Mammary epithelial cell (primary cell): ENCODE measurements at regions of chr1 and their contacts with region 1.

Region 1: GRCh38 chr1:147627435-147628110 is 42.8 kb downstream of the ACP6 start:
- DNase-seq: peak; percentile 6
- H3K4me3 ChIP-seq: no peak overlapping the region
- H3K27ac ChIP-seq: no peak overlapping the region
- H3K4me1 ChIP-seq: no peaks in the 10 kb centered on the region
- H3K27me3 ChIP-seq: no peaks in the 10 kb centered on the region
- CTCF ChIP-seq: peak; percentile 85 to 96

Region 2: DNA sequence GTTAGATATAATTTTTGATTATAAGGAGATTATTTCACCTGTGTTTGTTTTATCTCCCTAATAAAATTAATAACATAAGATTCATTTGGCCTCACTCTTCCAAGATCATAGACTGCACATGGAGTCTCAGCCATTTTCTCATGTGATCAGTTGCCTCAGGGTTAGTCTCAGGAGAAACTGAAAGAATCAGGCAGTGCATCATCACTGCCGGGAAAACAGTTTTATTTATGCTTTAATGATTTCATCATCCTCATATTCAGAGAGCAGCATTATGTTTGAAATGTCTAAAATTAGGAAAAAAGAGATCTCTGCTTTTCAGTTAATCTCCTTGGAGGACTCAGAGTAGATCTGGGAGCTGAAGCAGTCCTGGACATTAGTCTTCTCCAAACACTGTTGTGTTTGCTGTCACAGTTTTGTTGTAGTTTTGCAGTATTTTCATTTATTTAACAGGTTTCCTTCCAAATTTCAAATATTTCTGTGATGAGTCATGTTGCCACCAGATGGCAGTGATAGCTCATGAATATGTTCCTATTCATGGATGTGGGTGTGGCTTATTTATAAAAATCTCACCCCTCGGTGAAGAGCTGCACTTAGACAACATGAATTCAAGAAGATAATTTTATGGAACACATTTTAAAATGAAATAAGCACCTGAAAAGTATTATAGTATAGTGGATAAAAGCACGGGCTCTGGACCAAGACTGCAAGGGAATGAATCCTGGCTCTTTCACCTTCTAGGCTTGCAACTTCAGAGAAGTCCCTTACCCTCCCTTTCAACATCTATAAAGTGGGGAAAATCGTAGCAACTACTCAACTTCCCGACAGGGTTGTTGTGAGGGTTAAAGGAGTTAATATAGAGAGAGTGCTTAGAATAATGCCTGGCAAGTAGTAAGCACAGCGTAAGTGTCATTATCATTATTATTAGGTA is 353.9 kb before region 1 on chr1:
- CTCF ChIA-PET with region 1: no interaction called
- dilution Hi-C with region 1: no loop called
- in situ Hi-C with region 1: loop called in 1 of 2 experiments (anchors 25 kb)
- intact Hi-C with region 1: loop called (anchors 10 kb)
- DNase-seq: peak; percentile 79
- H3K4me3 ChIP-seq: no peak overlapping the region
- H3K27ac ChIP-seq: peak overlapping the region; percentile 83
- H3K4me1 ChIP-seq: peaks cover 10% of the 10 kb centered on the region
- H3K27me3 ChIP-seq: no peaks in the 10 kb centered on the region
- CTCF ChIP-seq: peak; percentile 30 to 45

Region 3: DNA sequence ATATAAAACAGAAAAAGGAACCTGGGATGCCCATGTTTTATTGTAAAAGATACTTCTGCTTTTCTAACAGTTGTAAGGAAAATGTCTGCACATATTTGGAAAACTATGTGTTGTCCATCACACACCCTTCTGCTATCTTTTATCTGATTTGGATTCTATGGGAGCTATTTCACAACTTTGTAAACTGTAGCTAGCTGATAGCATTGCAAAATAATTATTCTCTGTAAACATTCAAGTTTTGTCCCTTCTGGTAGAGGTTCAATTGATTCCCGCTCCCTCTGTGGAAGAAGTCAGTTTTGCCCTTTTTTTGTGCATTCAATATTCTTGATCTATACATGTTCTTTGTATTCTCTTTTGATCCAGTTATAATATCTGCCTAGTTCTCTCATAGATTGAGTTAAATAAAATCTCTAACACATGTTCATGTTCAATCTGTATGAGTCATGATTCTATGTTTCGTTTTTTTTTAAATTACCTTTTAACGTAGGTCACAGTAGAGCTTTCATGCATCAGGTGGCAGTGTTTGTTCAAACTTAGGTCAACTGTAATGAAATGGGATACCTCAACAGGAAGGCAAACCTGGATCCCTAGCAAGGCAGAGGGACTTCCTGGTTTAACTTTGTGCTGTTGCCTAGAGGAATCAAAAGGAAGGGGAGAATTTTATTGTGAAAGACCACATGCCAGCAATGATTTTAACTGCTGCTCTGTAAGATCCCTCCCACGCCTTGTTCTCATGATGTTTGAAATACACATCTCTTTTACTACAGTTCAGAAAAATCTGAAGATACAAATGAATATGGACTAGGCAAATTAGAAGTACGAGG is 112.3 kb before region 1 on chr1:
- CTCF ChIA-PET with region 1: no interaction called
- dilution Hi-C with region 1: loop called (anchors 25 kb)
- in situ Hi-C with region 1: loop called (anchors 10 kb)
- intact Hi-C with region 1: loop called (anchors 1 kb)
- DNase-seq: peak; percentile 64
- H3K4me3 ChIP-seq: no peak overlapping the region
- H3K27ac ChIP-seq: no peak overlapping the region
- H3K4me1 ChIP-seq: no peaks in the 10 kb centered on the region
- H3K27me3 ChIP-seq: peaks cover 3% of the 10 kb centered on the region
- CTCF ChIP-seq: peak in 1 of 2 donors; percentile 47

Region 4: DNA sequence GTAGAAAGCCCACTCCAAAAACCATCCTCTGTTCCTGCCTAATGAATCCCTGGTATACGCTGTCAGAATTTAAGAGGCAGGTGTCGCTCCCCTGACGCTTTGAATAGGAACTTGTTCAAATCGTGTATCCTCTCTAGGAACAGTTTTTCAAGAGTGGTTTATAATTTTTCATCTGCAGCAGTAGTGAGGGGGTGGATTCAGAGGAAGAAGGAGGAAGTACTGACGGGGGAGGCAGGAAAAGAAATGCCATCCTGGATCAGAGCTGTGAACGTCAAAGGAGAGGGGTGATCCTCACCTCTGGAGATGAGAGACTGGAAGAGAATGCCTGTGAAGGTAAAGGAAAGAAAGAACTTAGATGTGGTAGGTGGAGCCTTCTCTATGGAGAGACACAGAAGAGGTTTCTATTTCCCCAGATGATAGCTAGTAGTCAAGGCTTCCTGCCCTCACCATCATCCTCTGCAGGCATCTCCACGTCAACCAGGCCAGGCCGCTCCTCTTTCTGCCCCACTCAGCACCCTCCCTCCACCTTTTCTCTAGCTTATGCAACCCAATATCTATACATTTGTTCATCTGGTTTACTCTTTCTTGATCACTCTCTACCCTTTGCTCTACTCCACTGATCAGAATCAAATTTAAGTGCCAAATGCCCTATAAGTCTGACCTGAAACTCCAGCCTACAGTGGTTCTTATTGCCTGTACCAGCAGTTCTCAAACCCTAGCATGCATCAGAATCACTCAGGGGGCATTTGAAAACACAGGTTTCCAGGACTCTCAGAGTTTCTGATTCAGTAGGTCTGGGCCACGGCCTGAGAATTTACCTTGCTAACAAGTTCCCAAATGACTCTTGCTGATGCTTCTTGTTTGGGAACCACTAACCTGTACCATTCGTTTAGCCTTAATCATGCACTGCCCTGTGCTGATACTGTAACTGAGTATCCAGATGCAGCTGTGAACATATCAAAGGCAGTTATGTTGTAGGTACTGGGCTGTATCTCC is 99.3 kb before region 1 on chr1:
- CTCF ChIA-PET with region 1: no interaction called
- dilution Hi-C with region 1: loop called (anchors 25 kb)
- in situ Hi-C with region 1: loop called in 1 of 2 experiments (anchors 10 kb)
- intact Hi-C with region 1: no loop called
- DNase-seq: no peak
- H3K4me3 ChIP-seq: no peak overlapping the region
- H3K27ac ChIP-seq: no peak overlapping the region
- H3K4me1 ChIP-seq: no peaks in the 10 kb centered on the region
- H3K27me3 ChIP-seq: peaks cover 9% of the 10 kb centered on the region
- CTCF ChIP-seq: no peak

Region 5: DNA sequence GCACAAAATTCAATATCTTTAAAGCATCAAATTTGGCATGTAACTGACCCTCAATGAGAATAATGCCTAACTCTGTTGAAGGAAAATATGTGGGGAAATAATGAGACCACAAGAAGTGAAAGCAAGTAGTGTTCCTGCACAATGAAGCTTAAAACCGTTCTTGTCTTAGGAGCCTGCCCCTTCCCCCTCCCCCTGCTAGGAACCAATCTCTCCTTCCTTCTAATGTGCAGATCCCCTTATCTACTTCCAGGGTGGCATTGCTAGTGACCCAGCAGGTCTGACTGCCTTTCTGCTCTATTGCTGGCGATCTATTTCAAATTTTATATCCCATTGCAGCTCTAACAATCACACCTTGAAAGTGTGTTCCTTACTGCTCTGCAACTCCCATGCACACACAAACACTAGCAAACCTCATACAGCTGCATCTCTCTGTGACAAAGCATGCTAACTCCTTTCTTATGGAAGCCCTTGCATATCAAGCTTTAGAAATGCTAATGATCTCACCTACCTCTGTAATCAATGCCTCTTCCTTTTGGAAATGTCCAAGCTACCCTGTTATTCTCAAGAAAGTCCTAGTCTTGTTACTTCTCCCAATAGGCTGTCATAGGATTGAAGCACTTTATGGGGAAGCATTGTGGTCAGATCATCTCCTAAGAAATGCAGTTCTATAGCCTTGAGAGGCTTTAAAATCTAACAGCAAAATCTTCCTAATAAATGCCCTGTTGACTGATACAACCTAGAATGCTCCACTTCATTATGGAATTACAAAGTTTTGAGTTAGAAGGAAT is 59.8 kb before region 1 on chr1:
- CTCF ChIA-PET with region 1: no interaction called
- dilution Hi-C with region 1: no loop called
- in situ Hi-C with region 1: no loop called
- intact Hi-C with region 1: no loop called
- DNase-seq: no peak
- H3K4me3 ChIP-seq: no peak overlapping the region
- H3K27ac ChIP-seq: no peak overlapping the region
- H3K4me1 ChIP-seq: no peaks in the 10 kb centered on the region
- H3K27me3 ChIP-seq: peaks cover 4% of the 10 kb centered on the region
- CTCF ChIP-seq: no peak

Region 6: DNA sequence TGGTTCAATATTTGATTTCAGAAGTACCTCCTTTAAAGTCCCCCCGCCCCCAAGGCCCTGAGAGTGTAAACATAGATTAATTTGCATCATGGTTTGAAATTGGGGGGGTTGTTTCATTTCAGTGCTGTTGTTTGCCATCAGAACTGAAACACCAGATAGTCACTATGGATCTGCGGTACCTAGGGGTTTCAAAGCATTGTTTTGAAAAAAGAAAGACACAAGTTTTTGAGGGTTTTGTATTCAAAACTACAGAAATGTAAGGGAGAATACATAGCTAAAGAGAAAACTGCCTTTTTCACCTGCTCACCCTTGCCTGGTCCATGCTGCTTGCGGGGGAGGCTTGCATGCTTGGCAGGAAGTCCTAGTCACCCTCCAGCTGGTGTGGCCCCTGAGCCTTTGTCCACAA is 16.5 kb before region 1 on chr1:
- CTCF ChIA-PET with region 1: interaction called, 14 read pairs
- dilution Hi-C with region 1: no loop called
- in situ Hi-C with region 1: no loop called
- intact Hi-C with region 1: no loop called
- DNase-seq: no peak
- H3K4me3 ChIP-seq: no peak overlapping the region
- H3K27ac ChIP-seq: no peak overlapping the region
- H3K4me1 ChIP-seq: no peaks in the 10 kb centered on the region
- H3K27me3 ChIP-seq: no peaks in the 10 kb centered on the region
- CTCF ChIP-seq: no peak